PC-9 (cell line): ENCODE measurements at regions of chr3 and their contacts with region 1.

Region 1: GRCh38 chr3:3200632-3201212 is 21.2 kb upstream of the CRBN start:
- DNase-seq: peak in 1 of 2 experiments; percentile 25
- H3K4me3 ChIP-seq: no peak overlapping the region
- H3K27ac ChIP-seq: no peak overlapping the region
- H3K4me1 ChIP-seq: no peaks in the 10 kb centered on the region
- H3K27me3 ChIP-seq: no peaks in the 10 kb centered on the region
- CTCF ChIP-seq: peak; percentile 69

Region 2: DNA sequence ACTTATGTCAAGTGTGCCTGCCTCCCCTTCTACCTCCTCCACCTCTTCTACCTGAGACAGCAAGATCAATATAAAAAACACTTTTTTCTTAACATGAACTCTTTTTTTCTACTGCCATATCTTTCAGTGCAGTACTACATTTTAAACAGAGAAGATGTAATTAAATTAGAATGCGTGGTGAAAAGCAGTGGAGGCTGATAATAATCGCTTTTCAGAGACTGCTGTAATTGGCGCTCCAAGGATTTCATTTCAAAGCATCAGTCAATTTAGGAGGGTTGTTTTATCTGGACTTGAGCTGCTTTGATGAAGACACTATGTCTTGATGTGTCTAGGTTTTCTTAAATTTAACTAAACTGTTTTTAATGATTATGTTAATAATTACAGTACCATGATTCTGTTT is 64.1 kb after region 1 on chr3:
- CTCF ChIA-PET with region 1: no interaction called
- POLR2A ChIA-PET with region 1: no interaction called
- intact Hi-C with region 1: no loop called
- DNase-seq: no peak
- H3K4me3 ChIP-seq: no peak overlapping the region
- H3K27ac ChIP-seq: no peak overlapping the region
- H3K4me1 ChIP-seq: no peaks in the 10 kb centered on the region
- H3K27me3 ChIP-seq: no peaks in the 10 kb centered on the region
- CTCF ChIP-seq: no peak

Region 3: GRCh38 chr3:3998140-3998922 is 797.6 kb after region 1 on chr3:
- CTCF ChIA-PET with region 1: interaction called, 3 read pairs
- POLR2A ChIA-PET with region 1: no interaction called
- intact Hi-C with region 1: loop called (anchors 5 kb)
- DNase-seq: peak in 1 of 2 experiments; percentile 10
- H3K4me3 ChIP-seq: no peak overlapping the region
- H3K27ac ChIP-seq: no peak overlapping the region
- H3K4me1 ChIP-seq: no peaks in the 10 kb centered on the region
- H3K27me3 ChIP-seq: no peaks in the 10 kb centered on the region
- CTCF ChIP-seq: peak; percentile 40; the same call in 1 of the 2 replicates

Region 4: DNA sequence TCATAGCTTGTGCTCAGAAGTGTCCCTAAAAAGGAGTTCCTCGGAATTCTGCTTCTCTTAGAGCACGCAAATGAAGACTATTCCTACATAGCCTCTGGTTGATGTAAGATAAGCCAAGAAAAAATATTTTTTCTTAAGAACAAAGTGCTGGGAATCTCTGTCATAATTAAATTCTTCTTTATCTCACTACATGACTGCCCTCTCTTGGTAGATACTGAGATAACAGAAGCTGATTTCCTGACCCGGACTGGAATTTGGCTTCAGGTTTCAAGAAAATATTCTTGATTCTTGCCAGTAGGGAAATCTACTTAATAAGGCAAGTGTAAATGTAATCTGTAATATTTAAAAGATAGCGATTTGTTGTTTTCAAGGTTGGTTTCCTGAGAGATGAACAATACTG is 1071.1 kb after region 1 on chr3:
- CTCF ChIA-PET with region 1: no interaction called
- POLR2A ChIA-PET with region 1: no interaction called
- intact Hi-C with region 1: loop called (anchors 1 kb)
- DNase-seq: no peak
- H3K4me3 ChIP-seq: no peak overlapping the region
- H3K27ac ChIP-seq: no peak overlapping the region
- H3K4me1 ChIP-seq: no peaks in the 10 kb centered on the region
- H3K27me3 ChIP-seq: no peaks in the 10 kb centered on the region
- CTCF ChIP-seq: peak; percentile 68

Region 5: GRCh38 chr3:4290272-4290893 is 1089.7 kb after region 1 on chr3:
- CTCF ChIA-PET with region 1: interaction called, 4 read pairs
- POLR2A ChIA-PET with region 1: no interaction called
- intact Hi-C with region 1: loop called (anchors 1 kb)
- DNase-seq: peak in 1 of 2 experiments; percentile 38
- H3K4me3 ChIP-seq: no peak overlapping the region
- H3K27ac ChIP-seq: no peak overlapping the region
- H3K4me1 ChIP-seq: no peaks in the 10 kb centered on the region
- H3K27me3 ChIP-seq: no peaks in the 10 kb centered on the region
- CTCF ChIP-seq: peak; percentile 78

Region 6: GRCh38 chr3:4633078-4634004 is 1432.6 kb after region 1 on chr3:
- CTCF ChIA-PET with region 1: no interaction called
- POLR2A ChIA-PET with region 1: no interaction called
- intact Hi-C with region 1: loop called (anchors 1 kb)
- DNase-seq: peak; percentile 12 to 43
- H3K4me3 ChIP-seq: no peak overlapping the region
- H3K27ac ChIP-seq: no peak overlapping the region
- H3K4me1 ChIP-seq: no peaks in the 10 kb centered on the region
- H3K27me3 ChIP-seq: no peaks in the 10 kb centered on the region
- CTCF ChIP-seq: peak; percentile 77